Activated naive CD4-positive, alpha-beta T cell treated with anti-CD3 and anti-CD28 coated beads for 36 hours (primary cell): ENCODE measurements at regions of chr10 and their contacts with region 1.

Region 1: GRCh38 chr10:32346134-32346550 is 816 bp downstream of the EPC1 start:
- DNase-seq: peak; percentile 97
- H3K4me3 Mint-ChIP-seq: peak overlapping the region; percentile 89
- H3K27ac Mint-ChIP-seq: peak overlapping the region; percentile 99
- H3K4me1 Mint-ChIP-seq: peaks cover 65% of the 10 kb centered on the region
- H3K27me3 Mint-ChIP-seq: no peaks in the 10 kb centered on the region

Region 2: DNA sequence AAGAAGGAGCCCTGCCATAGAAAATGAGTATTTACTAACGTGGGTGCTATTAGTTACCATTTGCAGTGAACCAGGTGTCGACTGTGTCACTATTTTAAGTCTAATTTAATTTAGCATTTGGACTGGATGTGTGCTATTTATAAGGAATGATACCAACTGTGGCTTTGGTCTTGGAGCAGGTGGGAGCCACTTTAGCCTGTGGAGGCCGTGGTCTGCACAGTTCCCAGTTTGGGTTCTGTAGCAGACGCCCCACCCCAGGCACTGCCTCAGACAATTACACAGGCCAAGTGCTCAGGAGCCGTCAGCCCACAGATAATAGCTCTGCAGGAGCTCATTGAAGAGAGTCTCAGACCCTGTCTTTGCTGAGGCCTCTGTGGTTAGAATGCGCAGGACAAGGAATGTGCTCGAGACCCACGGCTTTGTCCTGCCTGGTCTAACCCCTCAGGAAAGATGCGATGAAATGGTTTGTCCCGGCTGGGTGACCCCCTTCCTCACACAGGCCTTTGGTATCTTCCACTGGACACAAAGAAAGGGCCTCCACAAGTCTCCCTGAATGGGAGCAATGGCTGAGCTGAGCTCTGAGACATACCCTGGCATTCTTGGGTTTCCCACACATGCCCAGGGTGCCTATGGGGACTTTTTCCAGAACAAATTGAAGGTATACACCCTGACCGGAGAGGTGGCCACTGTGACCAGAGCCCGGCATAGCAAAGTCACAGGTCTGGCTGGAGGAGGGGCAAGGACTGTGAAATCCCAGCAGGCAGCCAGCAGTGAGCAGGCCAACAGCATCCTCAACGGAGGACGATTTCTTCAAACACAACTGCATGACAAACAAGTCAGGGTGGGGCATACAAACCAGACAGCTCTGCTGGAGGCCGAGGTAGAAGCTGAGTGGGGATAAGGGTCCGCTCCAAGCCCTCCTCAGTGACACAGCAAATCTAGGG is 668.7 kb before region 1 on chr10:
- CTCF ChIA-PET with region 1: no interaction called
- intact Hi-C with region 1: no loop called
- DNase-seq: no peak
- H3K4me3 Mint-ChIP-seq: no peak overlapping the region
- H3K27ac Mint-ChIP-seq: no peak overlapping the region
- H3K4me1 Mint-ChIP-seq: no peaks in the 10 kb centered on the region
- H3K27me3 Mint-ChIP-seq: no peaks in the 10 kb centered on the region

Region 3: GRCh38 chr10:32095116-32095733 is 250.9 kb before region 1 on chr10:
- CTCF ChIA-PET with region 1: no interaction called
- intact Hi-C with region 1: no loop called
- DNase-seq: no peak
- H3K4me3 Mint-ChIP-seq: no peak overlapping the region
- H3K27ac Mint-ChIP-seq: no peak overlapping the region
- H3K4me1 Mint-ChIP-seq: no peaks in the 10 kb centered on the region
- H3K27me3 Mint-ChIP-seq: peaks cover 5% of the 10 kb centered on the region

Region 4: DNA sequence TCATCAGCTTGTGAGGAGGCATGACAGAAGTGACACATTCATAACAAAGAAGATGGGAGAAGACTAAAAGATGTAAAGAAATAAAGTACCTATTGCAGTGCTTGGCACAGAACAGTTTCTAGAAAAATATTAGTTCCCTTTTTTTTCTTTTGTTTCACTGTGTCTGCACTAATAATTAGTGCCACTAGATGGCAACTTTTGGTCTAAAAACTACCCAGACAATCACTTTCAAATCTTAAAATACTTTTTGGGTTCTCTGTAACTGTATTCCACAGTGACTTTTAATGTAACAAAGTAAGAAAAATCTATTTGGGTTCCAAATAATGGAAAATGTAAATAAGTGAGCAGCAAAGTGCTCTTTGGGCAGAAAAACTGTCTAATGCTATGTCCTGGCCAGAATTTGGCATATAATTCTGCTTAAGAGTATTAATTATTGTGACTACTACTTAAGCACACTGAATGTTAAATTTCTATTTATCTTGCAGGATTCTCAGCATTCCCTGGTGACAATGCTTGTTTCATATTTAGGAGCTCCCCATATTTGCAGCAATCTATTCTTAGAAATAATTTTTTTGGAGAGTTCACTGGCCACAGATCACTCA is 155.2 kb before region 1 on chr10:
- CTCF ChIA-PET with region 1: interaction called, 3 read pairs
- intact Hi-C with region 1: loop called (anchors 1 kb)
- DNase-seq: no peak
- H3K4me3 Mint-ChIP-seq: no peak overlapping the region
- H3K27ac Mint-ChIP-seq: no peak overlapping the region
- H3K4me1 Mint-ChIP-seq: peaks cover 2% of the 10 kb centered on the region
- H3K27me3 Mint-ChIP-seq: no peaks in the 10 kb centered on the region

Region 5: DNA sequence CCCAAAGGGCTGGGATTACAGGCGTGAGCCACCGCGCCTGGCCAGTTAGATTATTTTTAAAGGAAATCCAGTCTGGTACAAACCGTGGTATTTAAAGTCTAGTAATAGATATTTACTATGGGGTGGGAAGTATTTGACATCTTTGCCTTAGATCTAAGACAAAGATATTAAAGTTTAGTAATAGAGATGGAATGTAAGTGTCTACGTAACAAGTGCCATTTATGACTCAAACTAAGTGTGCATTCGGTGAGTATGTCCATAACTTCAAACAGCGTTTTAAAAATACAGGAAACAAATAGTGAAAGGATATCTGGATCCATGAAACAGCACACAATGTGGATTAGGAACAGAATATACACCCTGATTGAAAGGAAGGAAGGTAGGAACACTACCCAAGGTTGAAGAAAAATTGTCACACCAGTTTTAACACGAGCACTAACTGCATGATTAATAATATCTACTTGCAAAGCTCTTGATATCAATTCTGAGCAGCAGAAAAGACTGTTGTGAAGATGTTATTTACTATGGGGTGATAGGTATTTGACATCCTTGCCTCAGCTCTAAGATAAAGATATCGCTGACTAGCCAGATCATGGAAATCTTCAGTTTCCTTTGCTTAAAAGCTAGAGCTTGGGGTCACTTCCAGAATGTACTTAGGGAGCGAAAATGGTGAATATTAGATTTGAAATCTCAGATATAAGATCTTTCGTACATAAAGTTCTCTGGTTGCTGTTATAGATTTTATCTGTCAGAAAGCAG is 47.9 kb before region 1 on chr10:
- CTCF ChIA-PET with region 1: interaction called, 5 read pairs
- intact Hi-C with region 1: loop called (anchors 5 kb)
- DNase-seq: no peak
- H3K4me3 Mint-ChIP-seq: peak overlapping the region; percentile 33
- H3K27ac Mint-ChIP-seq: peak overlapping the region; percentile 68
- H3K4me1 Mint-ChIP-seq: peaks cover 62% of the 10 kb centered on the region
- H3K27me3 Mint-ChIP-seq: no peaks in the 10 kb centered on the region

Region 6: DNA sequence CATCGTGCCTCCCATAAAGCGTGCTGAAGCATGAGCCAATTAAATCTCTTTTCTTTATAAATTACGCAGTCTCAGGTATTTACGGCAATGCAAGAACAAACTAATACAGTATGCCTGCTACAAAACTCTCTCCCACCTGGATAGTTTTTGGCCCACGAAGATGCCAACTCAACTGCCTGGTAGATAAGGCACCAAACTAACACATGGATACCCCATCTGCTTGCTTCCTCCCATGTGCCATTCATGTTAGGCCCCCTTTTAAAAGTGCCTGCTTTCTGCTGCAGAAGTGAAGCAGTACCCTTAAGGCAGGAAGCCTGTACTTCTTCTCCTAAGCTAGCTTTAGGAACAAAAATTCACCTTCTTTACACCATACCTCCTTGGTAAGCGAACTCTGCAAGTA is 16.4 kb after region 1 on chr10:
- CTCF ChIA-PET with region 1: interaction called, 17 read pairs
- intact Hi-C with region 1: loop called (anchors 1 kb)
- DNase-seq: no peak
- H3K4me3 Mint-ChIP-seq: no peak overlapping the region
- H3K27ac Mint-ChIP-seq: no peak overlapping the region
- H3K4me1 Mint-ChIP-seq: peaks cover 59% of the 10 kb centered on the region
- H3K27me3 Mint-ChIP-seq: no peaks in the 10 kb centered on the region

Region 7: GRCh38 chr10:32378363-32379317 is 32.5 kb after region 1 on chr10:
- CTCF ChIA-PET with region 1: interaction called, 7 read pairs
- intact Hi-C with region 1: loop called (anchors 1 kb)
- DNase-seq: peak; percentile 97
- H3K4me3 Mint-ChIP-seq: no peak overlapping the region
- H3K27ac Mint-ChIP-seq: no peak overlapping the region
- H3K4me1 Mint-ChIP-seq: peaks cover 13% of the 10 kb centered on the region
- H3K27me3 Mint-ChIP-seq: no peaks in the 10 kb centered on the region